ENCODE measurements at regions of chr3 and their contacts with region 1.

Region 1: DNA sequence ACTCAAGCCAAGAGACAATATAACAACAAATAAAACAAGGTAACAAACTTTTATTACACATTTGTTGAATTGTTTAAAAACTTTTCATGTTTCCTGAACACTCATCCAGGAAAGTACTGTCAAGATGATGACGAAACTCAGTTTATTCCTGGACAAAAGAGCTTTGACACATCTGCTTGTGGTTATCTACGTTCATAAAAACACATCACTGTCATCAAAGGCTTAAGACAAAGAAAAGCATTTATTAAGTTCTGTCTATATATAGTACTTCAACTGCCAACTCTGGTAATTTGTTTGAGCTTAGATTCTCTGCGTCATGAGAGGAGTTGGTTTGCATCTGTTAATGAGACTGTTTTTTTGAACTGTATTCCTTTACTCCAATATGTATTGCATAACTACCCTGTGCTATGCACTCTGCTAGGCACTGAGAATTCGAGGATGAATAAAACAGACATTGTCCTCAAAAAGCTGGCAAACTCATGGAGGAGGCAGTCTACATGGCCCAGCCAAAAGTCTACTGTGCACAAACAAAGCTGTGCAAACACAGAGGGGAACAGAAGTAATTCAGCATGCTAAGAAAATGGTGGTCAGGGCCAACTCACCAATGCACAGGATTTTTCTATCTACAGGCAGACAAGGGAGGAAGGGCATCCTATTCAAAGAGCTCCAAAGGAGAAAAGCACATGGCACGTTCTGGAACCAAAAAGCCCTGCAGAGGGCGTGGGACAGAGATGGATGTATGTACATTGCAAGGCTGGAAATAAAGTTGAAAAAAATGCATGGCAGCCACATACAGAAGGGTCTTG is 21.5 kb downstream of the PLD1 start:
- DNase-seq: peak; percentile 92
- H3K4me3 ChIP-seq: no peak overlapping the region
- H3K27ac ChIP-seq: peak overlapping the region; percentile 99
- H3K4me1 ChIP-seq: peaks cover 75% of the 10 kb centered on the region
- H3K27me3 ChIP-seq: no peaks in the 10 kb centered on the region
- CTCF ChIP-seq: no peak
- POLR2A ChIP-seq: no peak

Region 2: GRCh38 chr3:171049861-171050444 is 738.8 kb before region 1 on chr3:
- CTCF ChIA-PET with region 1: no interaction called
- POLR2A ChIA-PET with region 1: no interaction called
- dilution Hi-C with region 1: no loop called
- intact Hi-C with region 1: no loop called
- DNase-seq: peak; percentile 67
- H3K4me3 ChIP-seq: no peak overlapping the region
- H3K27ac ChIP-seq: no peak overlapping the region
- H3K4me1 ChIP-seq: no peaks in the 10 kb centered on the region
- H3K27me3 ChIP-seq: no peaks in the 10 kb centered on the region
- CTCF ChIP-seq: peak; percentile 58 to 63
- POLR2A ChIP-seq: no peak

Region 3: GRCh38 chr3:171801738-171802600 is 13.2 kb after region 1 on chr3:
- CTCF ChIA-PET with region 1: interaction called, 17 read pairs
- POLR2A ChIA-PET with region 1: interaction called, 11 read pairs
- dilution Hi-C with region 1: no loop called
- intact Hi-C with region 1: loop called (anchors 1 kb)
- DNase-seq: peak; percentile 97
- H3K4me3 ChIP-seq: no peak overlapping the region
- H3K27ac ChIP-seq: peak overlapping the region; percentile 97
- H3K4me1 ChIP-seq: peaks cover 86% of the 10 kb centered on the region
- H3K27me3 ChIP-seq: no peaks in the 10 kb centered on the region
- CTCF ChIP-seq: no peak
- POLR2A ChIP-seq: peak; percentile 40

Region 4: GRCh38 chr3:171809821-171810628 is 21.3 kb after region 1 on chr3 and contains the start of gene PLD1:
- CTCF ChIA-PET with region 1: interaction called, 9 read pairs
- POLR2A ChIA-PET with region 1: interaction called, 11 read pairs
- dilution Hi-C with region 1: no loop called
- intact Hi-C with region 1: loop called (anchors 1 kb)
- DNase-seq: peak; percentile 79
- H3K4me3 ChIP-seq: peak within 1 kb of the TSS; percentile 35 to 71 (median 60)
- H3K27ac ChIP-seq: peak within 1 kb of the TSS; percentile 93
- H3K4me1 ChIP-seq: peaks cover 45% of the 10 kb centered on the region
- H3K27me3 ChIP-seq: no peaks in the 10 kb centered on the region
- CTCF ChIP-seq: no peak
- POLR2A ChIP-seq: peak; percentile 82
- total RNA-seq, gene PLD1: 75.6 and 108 TPM in 2 replicates

Region 5: GRCh38 chr3:171950373-171950772 is 161.6 kb after region 1 on chr3:
- CTCF ChIA-PET with region 1: no interaction called
- POLR2A ChIA-PET with region 1: no interaction called
- dilution Hi-C with region 1: no loop called
- intact Hi-C with region 1: loop called (anchors 2 kb)
- DNase-seq: peak; percentile 72
- H3K4me3 ChIP-seq: no peak overlapping the region
- H3K27ac ChIP-seq: no peak overlapping the region
- H3K4me1 ChIP-seq: peaks cover 18% of the 10 kb centered on the region
- H3K27me3 ChIP-seq: no peaks in the 10 kb centered on the region
- CTCF ChIP-seq: no peak
- POLR2A ChIP-seq: no peak

Measured in endothelial cell of umbilical vein (primary cell).